HCT116 (cell line): ENCODE measurements at regions of chr1 and their contacts with region 1.

Region 1: GRCh38 chr1:170692866-170693575 is 29.1 kb downstream of the PRRX1 start:
- DNase-seq: no peak
- ATAC-seq: no peak
- H3K4me3 ChIP-seq: no peak overlapping the region
- H3K27ac ChIP-seq: no peak overlapping the region
- H3K4me1 ChIP-seq: no peaks in the 10 kb centered on the region
- H3K27me3 ChIP-seq: no peaks in the 10 kb centered on the region
- CTCF ChIP-seq: no peak
- POLR2A ChIP-seq: no peak
- RAD21 ChIP-seq: no peak

Region 2: GRCh38 chr1:170674239-170674638 is 18.8 kb before region 1 on chr1:
- CTCF ChIA-PET with region 1: interaction called, 10 read pairs
- POLR2A ChIA-PET with region 1: no interaction called
- RAD21 ChIA-PET with region 1: no interaction called
- intact Hi-C with region 1: no loop called
- DNase-seq: no peak
- ATAC-seq: no peak
- H3K4me3 ChIP-seq: no peak overlapping the region
- H3K27ac ChIP-seq: no peak overlapping the region
- H3K4me1 ChIP-seq: no peaks in the 10 kb centered on the region
- H3K27me3 ChIP-seq: no peaks in the 10 kb centered on the region; the same call in 1 of the 2 replicates
- CTCF ChIP-seq: no peak
- POLR2A ChIP-seq: no peak
- RAD21 ChIP-seq: no peak

Region 3: GRCh38 chr1:170765712-170766330 is 72.8 kb after region 1 on chr1:
- CTCF ChIA-PET with region 1: interaction called, 13 read pairs
- POLR2A ChIA-PET with region 1: no interaction called
- RAD21 ChIA-PET with region 1: interaction called in 1 of 2 experiments, 4 read pairs
- intact Hi-C with region 1: loop called (anchors 2 kb)
- DNase-seq: peak; percentile 21
- ATAC-seq: peak; percentile 73
- H3K4me3 ChIP-seq: no peak overlapping the region
- H3K27ac ChIP-seq: no peak overlapping the region
- H3K4me1 ChIP-seq: no peaks in the 10 kb centered on the region
- H3K27me3 ChIP-seq: no peaks in the 10 kb centered on the region
- CTCF ChIP-seq: peak; percentile 31 to 64 (median 61); a peak in 5 of 6 replicates
- POLR2A ChIP-seq: no peak
- RAD21 ChIP-seq: peak; percentile 79

Region 4: DNA sequence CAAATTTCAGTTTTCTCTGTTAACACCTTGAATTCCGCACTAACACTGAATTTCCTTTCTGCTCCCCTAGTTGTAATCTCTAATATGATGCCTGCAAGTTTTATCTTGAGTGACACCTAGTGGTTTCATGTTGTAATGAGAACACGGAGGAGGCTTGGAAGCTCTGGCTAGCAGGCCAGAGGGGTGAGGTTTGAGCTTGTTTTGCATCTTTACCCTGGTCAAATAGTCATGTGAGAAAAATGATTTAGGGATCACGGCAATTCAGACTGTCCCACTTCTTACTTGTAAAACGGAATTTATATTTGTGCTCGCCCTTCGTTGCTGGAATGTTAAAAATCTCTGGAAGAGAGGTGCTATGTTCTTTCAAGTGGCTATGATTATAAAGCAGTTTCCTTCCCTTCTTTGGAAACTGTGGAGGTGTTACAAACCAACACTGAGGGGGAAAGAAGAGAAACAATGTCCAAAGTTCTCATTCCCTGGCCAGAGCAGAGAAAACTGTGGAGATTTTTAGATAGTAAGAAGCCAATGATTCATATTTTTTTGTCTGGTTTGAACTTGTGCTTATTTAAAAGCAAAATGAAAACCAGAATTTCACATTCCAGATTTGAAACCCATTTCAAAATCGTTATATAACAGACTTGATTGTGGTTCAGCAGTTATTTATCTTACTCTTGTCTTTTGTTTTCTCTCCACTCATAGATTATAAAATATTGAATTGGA is 237.0 kb after region 1 on chr1:
- CTCF ChIA-PET with region 1: interaction called, 9 read pairs
- POLR2A ChIA-PET with region 1: no interaction called
- RAD21 ChIA-PET with region 1: interaction called in 1 of 2 experiments, 4 read pairs
- intact Hi-C with region 1: loop called (anchors 1 kb)
- DNase-seq: peak; percentile 50
- ATAC-seq: peak; percentile 98
- H3K4me3 ChIP-seq: no peak overlapping the region
- H3K27ac ChIP-seq: no peak overlapping the region
- H3K4me1 ChIP-seq: no peaks in the 10 kb centered on the region
- H3K27me3 ChIP-seq: no peaks in the 10 kb centered on the region
- CTCF ChIP-seq: peak; percentile 63 to 73 (median 66); a peak in 5 of 6 replicates
- POLR2A ChIP-seq: no peak
- RAD21 ChIP-seq: peak; percentile 73